OCI-LY7 (cell line): ENCODE measurements at regions of chr12 and their contacts with region 1.

Region 1: DNA sequence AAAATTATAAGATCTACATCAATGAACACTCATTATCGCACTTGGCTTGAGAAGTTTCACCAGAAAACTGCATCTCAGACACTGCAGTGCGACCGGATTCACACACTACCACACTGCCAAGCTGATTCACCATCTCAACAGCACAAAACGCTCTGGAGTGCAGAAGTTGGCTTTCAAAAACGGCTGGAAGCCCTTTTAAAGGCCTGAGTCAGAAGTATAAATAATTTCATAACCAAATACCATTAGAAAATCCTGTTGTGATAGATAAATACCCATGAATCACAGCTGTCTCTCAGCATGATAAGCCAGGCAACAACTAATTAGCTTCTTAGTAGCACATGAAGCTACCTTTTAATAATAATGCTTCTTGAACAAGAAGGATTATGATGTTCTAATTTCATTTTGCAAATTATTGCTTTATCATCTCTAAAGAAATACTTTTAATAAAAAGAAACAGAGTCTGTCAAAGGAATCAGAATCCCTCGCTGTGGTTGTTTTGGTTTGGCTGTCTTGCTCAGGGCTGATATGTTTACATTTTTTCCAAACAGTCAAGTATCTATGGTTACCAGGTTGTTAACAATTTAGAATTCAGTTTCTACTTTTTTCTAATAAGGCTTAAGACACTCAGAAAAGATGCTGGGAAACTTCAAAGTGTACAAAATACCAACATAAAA is 51.2 kb downstream of the SLC2A13 start:
- DNase-seq: no peak
- H3K4me3 ChIP-seq: no peak overlapping the region
- H3K27ac ChIP-seq: no peak overlapping the region
- H3K4me1 ChIP-seq: peaks cover 10% of the 10 kb centered on the region
- CTCF ChIP-seq: no peak

Region 2: GRCh38 chr12:40038619-40039018 is 16.1 kb before region 1 on chr12:
- CTCF ChIA-PET with region 1: interaction called, 3 read pairs
- POLR2A ChIA-PET with region 1: interaction called, 11 read pairs
- intact Hi-C with region 1: no loop called
- DNase-seq: no peak
- H3K4me3 ChIP-seq: no peak overlapping the region
- H3K27ac ChIP-seq: no peak overlapping the region
- H3K4me1 ChIP-seq: no peaks in the 10 kb centered on the region
- CTCF ChIP-seq: no peak